ENCODE measurements at regions of chr16 and their contacts with region 1.

Region 1: DNA sequence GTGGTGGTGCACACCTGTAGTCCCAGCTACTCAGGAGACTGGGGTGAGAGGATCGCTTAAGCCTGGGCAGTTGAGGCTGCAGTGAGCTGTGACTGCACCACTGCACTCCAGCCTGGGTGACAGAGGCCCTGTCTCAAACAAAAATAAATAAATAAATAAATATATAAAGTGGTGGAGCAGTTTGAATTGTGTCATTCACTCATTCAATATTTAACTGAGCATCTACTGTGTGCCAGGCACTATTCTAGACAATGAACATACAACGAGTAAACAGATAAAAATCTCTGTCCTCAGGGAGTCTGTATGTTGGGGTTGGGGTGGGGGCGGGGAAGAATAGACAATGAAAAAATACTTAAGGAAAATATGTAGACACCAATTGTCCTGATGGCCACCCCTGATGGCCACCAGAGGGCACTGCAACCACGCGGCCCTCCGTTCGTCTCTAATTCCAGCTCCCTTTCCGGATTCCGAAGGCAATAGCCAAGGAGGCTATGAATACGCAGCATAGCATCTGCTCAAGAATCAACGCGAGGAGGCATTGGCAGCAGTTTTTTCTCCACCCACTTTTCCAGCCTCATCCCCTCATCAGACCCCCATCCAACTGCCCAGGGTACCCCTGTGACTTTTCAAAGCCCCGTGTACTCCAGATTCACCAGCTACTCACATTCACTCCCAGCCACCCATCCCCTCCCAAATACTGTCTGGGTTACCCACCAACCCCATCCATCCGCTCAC is 21.4 kb downstream of the QPRT start:
- DNase-seq: peak; percentile 88
- ATAC-seq: peak; percentile 45
- H3K4me3 Mint-ChIP-seq: peak overlapping the region; percentile 44
- H3K27ac Mint-ChIP-seq: peak overlapping the region; percentile 67
- H3K4me1 Mint-ChIP-seq: peaks cover 32% of the 10 kb centered on the region
- H3K27me3 Mint-ChIP-seq: no peaks in the 10 kb centered on the region

Region 2: GRCh38 chr16:29729116-29729521 is 28.7 kb after region 1 on chr16:
- CTCF ChIA-PET with region 1: interaction called, 41 read pairs
- POLR2A ChIA-PET with region 1: interaction called, 6 read pairs
- intact Hi-C with region 1: no loop called
- DNase-seq: no peak
- ATAC-seq: no peak
- H3K4me3 Mint-ChIP-seq: no peak overlapping the region
- H3K27ac Mint-ChIP-seq: no peak overlapping the region
- H3K4me1 Mint-ChIP-seq: peaks cover 37% of the 10 kb centered on the region
- H3K27me3 Mint-ChIP-seq: no peaks in the 10 kb centered on the region

Region 3: GRCh38 chr16:29790183-29790952 is 89.9 kb after region 1 on chr16 and contains the start of gene KIF22:
- CTCF ChIA-PET with region 1: interaction called, 25 read pairs
- POLR2A ChIA-PET with region 1: interaction called, 12 read pairs
- intact Hi-C with region 1: loop called (anchors 1 kb)
- DNase-seq: peak; percentile 100
- ATAC-seq: peak; percentile 95
- H3K4me3 Mint-ChIP-seq: peak within 1 kb of the TSS; percentile 91
- H3K27ac Mint-ChIP-seq: peak within 1 kb of the TSS; percentile 97
- H3K4me1 Mint-ChIP-seq: peaks cover 30% of the 10 kb centered on the region
- H3K27me3 Mint-ChIP-seq: no peaks in the 10 kb centered on the region
- total RNA-seq, gene KIF22: 153 to 168 TPM

Region 4: GRCh38 chr16:29836623-29837022 is 136.2 kb after region 1 on chr16:
- CTCF ChIA-PET with region 1: no interaction called
- POLR2A ChIA-PET with region 1: no interaction called
- intact Hi-C with region 1: no loop called
- DNase-seq: no peak
- ATAC-seq: no peak
- H3K4me3 Mint-ChIP-seq: no peak overlapping the region
- H3K27ac Mint-ChIP-seq: no peak overlapping the region
- H3K4me1 Mint-ChIP-seq: peaks cover 8% of the 10 kb centered on the region
- H3K27me3 Mint-ChIP-seq: no peaks in the 10 kb centered on the region

Region 5: GRCh38 chr16:29848420-29849297 is 148.2 kb after region 1 on chr16:
- CTCF ChIA-PET with region 1: interaction called, 45 read pairs
- POLR2A ChIA-PET with region 1: interaction called, 6 read pairs
- intact Hi-C with region 1: loop called (anchors 1 to 2 kb)
- DNase-seq: peak; percentile 93
- ATAC-seq: peak; percentile 97
- H3K4me3 Mint-ChIP-seq: no peak overlapping the region
- H3K27ac Mint-ChIP-seq: no peak overlapping the region
- H3K4me1 Mint-ChIP-seq: peaks cover 7% of the 10 kb centered on the region
- H3K27me3 Mint-ChIP-seq: no peaks in the 10 kb centered on the region

Region 6: GRCh38 chr16:30018731-30019158 is 318.3 kb after region 1 on chr16:
- CTCF ChIA-PET with region 1: interaction called, 14 read pairs
- POLR2A ChIA-PET with region 1: no interaction called
- intact Hi-C with region 1: loop called (anchors 1 kb)
- DNase-seq: no peak
- ATAC-seq: peak; percentile 36
- H3K4me3 Mint-ChIP-seq: no peak overlapping the region
- H3K27ac Mint-ChIP-seq: no peak overlapping the region
- H3K4me1 Mint-ChIP-seq: peaks cover 7% of the 10 kb centered on the region
- H3K27me3 Mint-ChIP-seq: no peaks in the 10 kb centered on the region